WTC11 (cell line): ENCODE measurements at regions of chr11 and their contacts with region 1.

Region 1: GRCh38 chr11:65779851-65780577 is 762 bp downstream of the AP5B1 start:
- DNase-seq: peak; percentile 97
- ATAC-seq: peak; percentile 77
- H3K4me3 Mint-ChIP-seq: peak overlapping the region; percentile 86
- H3K27ac Mint-ChIP-seq: peak overlapping the region; percentile 68; the same call in 1 of the 2 replicates
- H3K4me1 Mint-ChIP-seq: peaks cover 19% of the 10 kb centered on the region
- H3K27me3 Mint-ChIP-seq: peaks cover 32% of the 10 kb centered on the region
- CTCF ChIP-seq: peak; percentile 96

Region 2: GRCh38 chr11:65662799-65663638 is 117.0 kb before region 1 on chr11 and contains the start of gene RELA:
- CTCF ChIA-PET with region 1: interaction called, 16 read pairs
- POLR2A ChIA-PET with region 1: no interaction called
- DNase-seq: peak; percentile 93
- ATAC-seq: peak; percentile 87
- H3K4me3 Mint-ChIP-seq: peak within 1 kb of the TSS; percentile 86
- H3K27ac Mint-ChIP-seq: peak within 1 kb of the TSS; percentile 49
- H3K4me1 Mint-ChIP-seq: peaks cover 4% of the 10 kb centered on the region
- H3K27me3 Mint-ChIP-seq: no peaks in the 10 kb centered on the region; the same call in 1 of the 2 replicates
- CTCF ChIP-seq: no peak
- total RNA-seq, gene RELA: 26.3 to 35.1 TPM (median 29.0 TPM) in 3 replicates

Region 3: DNA sequence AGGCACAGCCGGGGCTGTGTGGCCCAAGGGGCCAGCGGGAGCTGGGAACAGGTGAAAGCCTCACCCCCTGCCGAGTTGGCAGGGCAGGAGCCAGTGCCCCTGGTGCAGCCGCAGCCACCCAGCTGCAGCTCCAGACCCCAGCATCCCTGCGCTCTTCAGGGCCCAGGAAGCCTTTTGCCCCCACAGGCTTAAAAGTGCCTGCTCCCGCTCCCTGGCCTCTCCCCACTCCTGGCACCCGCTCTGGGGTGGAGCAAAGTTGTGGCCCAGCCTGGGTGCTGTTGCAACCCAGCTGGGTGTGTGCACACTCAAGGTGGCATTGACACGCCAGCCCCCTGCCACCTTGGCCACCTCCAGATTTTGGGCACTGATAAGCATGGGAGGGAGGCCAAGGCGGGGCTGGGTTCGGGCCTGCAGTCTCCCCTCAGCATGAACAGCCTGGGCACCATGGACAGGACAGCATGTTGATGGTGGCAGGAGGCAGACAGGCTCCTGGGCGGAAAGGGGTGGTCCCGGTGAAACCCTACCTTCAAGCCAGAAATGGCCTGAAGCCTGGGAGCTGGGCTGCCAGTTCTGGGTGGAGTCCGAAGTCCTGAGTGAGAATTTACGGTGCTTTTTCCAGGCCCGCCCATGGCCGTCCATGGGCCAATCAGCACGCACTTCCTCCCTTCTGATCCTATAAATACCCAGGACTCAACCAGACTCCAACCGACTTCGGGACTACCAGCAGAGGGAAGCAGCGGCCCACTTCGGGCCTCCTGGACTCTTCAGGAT is 35.9 kb before region 1 on chr11:
- CTCF ChIA-PET with region 1: interaction called, 41 read pairs
- POLR2A ChIA-PET with region 1: no interaction called
- DNase-seq: peak; percentile 71
- ATAC-seq: peak; percentile 99
- H3K4me3 Mint-ChIP-seq: no peak overlapping the region
- H3K27ac Mint-ChIP-seq: no peak overlapping the region
- H3K4me1 Mint-ChIP-seq: no peaks in the 10 kb centered on the region
- H3K27me3 Mint-ChIP-seq: peaks cover 38% of the 10 kb centered on the region
- CTCF ChIP-seq: no peak

Region 4: GRCh38 chr11:65817835-65818742 is 38.1 kb after region 1 on chr11:
- CTCF ChIA-PET with region 1: interaction called, 159 read pairs
- POLR2A ChIA-PET with region 1: interaction called, 3 read pairs
- DNase-seq: peak; percentile 96
- ATAC-seq: peak; percentile 87
- H3K4me3 Mint-ChIP-seq: peak overlapping the region; percentile 72
- H3K27ac Mint-ChIP-seq: no peak overlapping the region
- H3K4me1 Mint-ChIP-seq: 0 out of 2 replicates have a peak, but pooled peaks cover 5% of the 10 kb centered on the region
- H3K27me3 Mint-ChIP-seq: peaks cover 15% of the 10 kb centered on the region
- CTCF ChIP-seq: peak; percentile 100

Region 5: GRCh38 chr11:65859200-65859811 is 79.3 kb after region 1 on chr11:
- CTCF ChIA-PET with region 1: interaction called, 40 read pairs
- POLR2A ChIA-PET with region 1: interaction called, 4 read pairs
- DNase-seq: peak; percentile 100
- ATAC-seq: peak; percentile 67
- H3K4me3 Mint-ChIP-seq: peak overlapping the region; percentile 90
- H3K27ac Mint-ChIP-seq: peak overlapping the region; percentile 100
- H3K4me1 Mint-ChIP-seq: peaks cover 23% of the 10 kb centered on the region
- H3K27me3 Mint-ChIP-seq: no peaks in the 10 kb centered on the region
- CTCF ChIP-seq: no peak